H1 (cell line): ENCODE measurements at regions of chr2 and their contacts with region 1.

Region 1: DNA sequence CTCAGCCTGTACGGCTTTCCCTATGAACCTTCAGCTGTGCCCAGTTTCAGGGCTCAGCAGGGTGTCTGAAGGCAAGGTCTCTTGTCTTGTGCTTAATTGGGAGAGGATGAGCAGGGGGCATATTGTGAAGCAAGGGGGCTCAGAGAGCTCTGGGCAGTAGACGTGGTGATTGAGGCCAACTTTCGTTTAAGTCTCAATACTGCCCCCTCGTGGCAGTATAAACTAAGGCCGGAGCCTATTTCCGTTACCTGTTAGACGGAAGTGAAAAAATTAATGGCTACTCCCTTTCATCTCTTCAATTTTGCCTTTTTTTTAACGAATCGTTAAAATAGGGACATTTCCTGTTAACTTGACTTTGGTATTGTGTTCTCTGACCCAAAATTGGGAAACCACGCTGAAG is 193.4 kb downstream of the TDRD15 start:
- DNase-seq: peak; percentile 15 to 69
- H3K4me3 ChIP-seq: no peak overlapping the region
- H3K27ac ChIP-seq: no peak overlapping the region
- H3K4me1 ChIP-seq: no peaks in the 10 kb centered on the region
- H3K27me3 ChIP-seq: no peaks in the 10 kb centered on the region
- CTCF ChIP-seq: peak in 2 of 3 experiments; percentile 68 to 70; a peak in 3 of 4 replicates
- EP300 ChIP-seq: no peak
- POLR2A ChIP-seq: no peak
- RAD21 ChIP-seq: peak; percentile 68 to 80

Region 2: GRCh38 chr2:21175895-21176646 is 141.1 kb before region 1 on chr2:
- CTCF ChIA-PET with region 1: interaction called, 32 read pairs
- POLR2A ChIA-PET with region 1: no interaction called
- DNase-seq: no peak
- H3K4me3 ChIP-seq: no peak overlapping the region
- H3K27ac ChIP-seq: no peak overlapping the region
- H3K4me1 ChIP-seq: no peaks in the 10 kb centered on the region
- H3K27me3 ChIP-seq: no peaks in the 10 kb centered on the region
- CTCF ChIP-seq: peak in 2 of 3 experiments; percentile 3 to 6; a peak in 2 of 4 replicates
- EP300 ChIP-seq: no peak
- POLR2A ChIP-seq: no peak
- RAD21 ChIP-seq: peak; percentile 31 to 45

Region 3: DNA sequence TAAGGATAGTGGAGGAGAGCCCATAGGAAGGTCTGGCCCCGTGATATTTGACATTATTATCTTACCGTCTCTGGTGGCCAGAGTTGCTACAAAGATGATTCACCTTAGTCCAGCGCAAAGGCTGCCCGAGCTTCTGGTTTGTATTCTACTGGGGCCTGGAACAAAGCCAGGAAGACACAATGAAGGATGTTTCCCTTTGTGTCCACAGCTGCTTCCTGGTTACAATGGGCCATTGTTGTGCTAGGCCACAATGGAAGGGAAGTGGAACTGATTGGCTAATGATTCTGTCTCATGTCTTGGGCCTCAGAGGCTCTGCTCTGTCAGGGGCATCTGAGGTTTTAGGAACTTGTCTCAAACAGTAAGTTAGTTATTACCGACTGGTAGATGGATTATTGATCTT is 61.1 kb before region 1 on chr2:
- CTCF ChIA-PET with region 1: interaction called, 22 read pairs
- POLR2A ChIA-PET with region 1: no interaction called
- DNase-seq: no peak
- H3K4me3 ChIP-seq: no peak overlapping the region
- H3K27ac ChIP-seq: no peak overlapping the region
- H3K4me1 ChIP-seq: peaks cover 0 to 7% (median 0%) of the 10 kb centered on the region in 4 experiments; a peak in 2 of 7 replicates
- H3K27me3 ChIP-seq: no peaks in the 10 kb centered on the region
- CTCF ChIP-seq: no peak
- EP300 ChIP-seq: no peak
- POLR2A ChIP-seq: no peak
- RAD21 ChIP-seq: no peak

Region 4: GRCh38 chr2:21279525-21279924 is 37.6 kb before region 1 on chr2:
- CTCF ChIA-PET with region 1: interaction called, 16 read pairs
- POLR2A ChIA-PET with region 1: no interaction called
- DNase-seq: no peak
- H3K4me3 ChIP-seq: no peak overlapping the region
- H3K27ac ChIP-seq: no peak overlapping the region
- H3K4me1 ChIP-seq: no peaks in the 10 kb centered on the region
- H3K27me3 ChIP-seq: no peaks in the 10 kb centered on the region
- CTCF ChIP-seq: no peak
- EP300 ChIP-seq: no peak
- POLR2A ChIP-seq: no peak
- RAD21 ChIP-seq: no peak

Region 5: GRCh38 chr2:21330786-21331391 is 13.8 kb after region 1 on chr2:
- CTCF ChIA-PET with region 1: interaction called, 24 read pairs
- POLR2A ChIA-PET with region 1: no interaction called
- DNase-seq: no peak
- H3K4me3 ChIP-seq: no peak overlapping the region
- H3K27ac ChIP-seq: no peak overlapping the region
- H3K4me1 ChIP-seq: peaks cover 0 to 5% (median 0%) of the 10 kb centered on the region in 4 experiments; a peak in 1 of 7 replicates
- H3K27me3 ChIP-seq: no peaks in the 10 kb centered on the region
- CTCF ChIP-seq: no peak
- EP300 ChIP-seq: no peak
- POLR2A ChIP-seq: no peak
- RAD21 ChIP-seq: no peak